GM12878 (cell line): ENCODE measurements at regions of chr2 and their contacts with region 1.

Region 1: DNA sequence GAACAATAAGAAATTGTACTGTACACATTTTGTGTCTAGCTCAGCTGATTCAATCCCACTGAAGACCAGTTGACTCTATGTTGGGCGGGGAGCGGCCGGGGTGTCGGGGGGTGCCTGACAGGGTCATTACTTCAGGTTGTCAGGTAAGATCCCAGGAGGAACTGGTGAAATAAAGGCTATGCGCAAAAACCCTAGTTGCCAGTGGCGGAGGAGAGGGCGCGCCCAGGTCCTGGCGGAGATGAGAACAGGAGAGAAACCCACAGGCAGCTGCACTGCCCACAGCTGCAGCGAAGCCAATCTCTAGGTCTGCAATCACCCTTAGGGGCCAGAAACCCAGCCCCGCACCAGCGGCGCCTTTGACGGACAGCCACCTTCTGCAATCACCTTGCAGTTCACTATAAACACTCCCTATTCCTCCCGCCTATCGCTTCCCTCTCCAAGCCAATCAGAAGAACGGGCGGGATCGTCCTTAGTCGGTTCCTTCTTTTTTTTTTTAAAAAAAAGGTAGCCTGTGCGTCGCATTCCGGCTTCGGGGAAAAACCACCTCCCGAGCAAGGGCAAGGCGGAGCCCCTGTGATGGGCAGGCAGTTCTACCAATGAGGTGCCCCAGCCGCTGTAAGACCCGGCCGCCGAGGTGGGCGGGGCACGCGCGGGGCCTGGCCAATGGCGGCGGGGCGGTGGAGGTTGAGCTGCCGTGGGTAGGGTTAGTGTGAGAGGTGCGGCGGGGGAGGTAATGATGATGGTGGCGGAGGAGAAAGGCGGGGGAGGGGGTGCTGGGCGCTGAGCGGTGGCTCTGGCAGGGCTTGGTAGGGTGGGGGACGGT is at the start of gene EHBP1:
- DNase-seq: peak; percentile 95
- ATAC-seq: peak; percentile 97
- H3K4me3 ChIP-seq: peak within 1 kb of the TSS; percentile 77
- H3K27ac ChIP-seq: peak within 1 kb of the TSS; percentile 68
- H3K4me1 ChIP-seq: no peaks in the 10 kb centered on the region
- H3K27me3 ChIP-seq: no peaks in the 10 kb centered on the region
- CTCF ChIP-seq: no peak
- EP300 ChIP-seq: no peak
- POLR2A ChIP-seq: peak; percentile 84
- RAD21 ChIP-seq: no peak
- polyA plus RNA-seq, gene EHBP1: 5.7 to 5.9 TPM

Region 2: GRCh38 chr2:62505750-62506420 is 199.3 kb before region 1 on chr2 and contains the start of gene TMEM17:
- CTCF ChIA-PET with region 1: interaction called, 5 read pairs
- POLR2A ChIA-PET with region 1: no interaction called
- RAD21 ChIA-PET with region 1: no interaction called
- SMC1A ChIA-PET with region 1: no interaction called
- in situ Hi-C with region 1: no loop called
- intact Hi-C with region 1: loop called (anchors 5 kb)
- DNase-seq: peak; percentile 35
- ATAC-seq: peak; percentile 94
- H3K4me3 ChIP-seq: peak within 1 kb of the TSS; percentile 88
- H3K27ac ChIP-seq: peak within 1 kb of the TSS; percentile 27; the same call in 1 of the 2 replicates
- H3K4me1 ChIP-seq: no peaks in the 10 kb centered on the region; the same call in 1 of the 2 replicates
- H3K27me3 ChIP-seq: no peaks in the 10 kb centered on the region
- CTCF ChIP-seq: no peak
- EP300 ChIP-seq: no peak
- POLR2A ChIP-seq: peak; percentile 47
- RAD21 ChIP-seq: 0 out of 2 replicates have a peak, but pooled peaks have one; percentile 4
- polyA plus RNA-seq, gene TMEM17: 1.2 to 1.6 TPM

Region 3: GRCh38 chr2:62660582-62661262 is 44.5 kb before region 1 on chr2:
- CTCF ChIA-PET with region 1: interaction called, 4 read pairs
- POLR2A ChIA-PET with region 1: no interaction called
- RAD21 ChIA-PET with region 1: interaction called, 4 read pairs
- SMC1A ChIA-PET with region 1: interaction called, 10 read pairs
- in situ Hi-C with region 1: no loop called
- intact Hi-C with region 1: loop called (anchors 2 kb)
- DNase-seq: no peak
- ATAC-seq: peak; percentile 43
- H3K4me3 ChIP-seq: no peak overlapping the region
- H3K27ac ChIP-seq: peak overlapping the region; percentile 62
- H3K4me1 ChIP-seq: peaks cover 34% of the 10 kb centered on the region
- H3K27me3 ChIP-seq: no peaks in the 10 kb centered on the region
- CTCF ChIP-seq: no peak
- EP300 ChIP-seq: no peak
- POLR2A ChIP-seq: no peak
- RAD21 ChIP-seq: no peak

Region 4: GRCh38 chr2:62719757-62720156 is 14.5 kb after region 1 on chr2:
- CTCF ChIA-PET with region 1: interaction called, 4 read pairs
- POLR2A ChIA-PET with region 1: interaction called, 9 read pairs
- RAD21 ChIA-PET with region 1: interaction called, 3 read pairs
- SMC1A ChIA-PET with region 1: interaction called, 18 read pairs
- in situ Hi-C with region 1: no loop called
- intact Hi-C with region 1: no loop called
- DNase-seq: no peak
- ATAC-seq: peak; percentile 55
- H3K4me3 ChIP-seq: no peak overlapping the region
- H3K27ac ChIP-seq: no peak overlapping the region
- H3K4me1 ChIP-seq: no peaks in the 10 kb centered on the region
- H3K27me3 ChIP-seq: no peaks in the 10 kb centered on the region
- CTCF ChIP-seq: no peak
- EP300 ChIP-seq: no peak
- POLR2A ChIP-seq: no peak
- RAD21 ChIP-seq: no peak

Region 5: DNA sequence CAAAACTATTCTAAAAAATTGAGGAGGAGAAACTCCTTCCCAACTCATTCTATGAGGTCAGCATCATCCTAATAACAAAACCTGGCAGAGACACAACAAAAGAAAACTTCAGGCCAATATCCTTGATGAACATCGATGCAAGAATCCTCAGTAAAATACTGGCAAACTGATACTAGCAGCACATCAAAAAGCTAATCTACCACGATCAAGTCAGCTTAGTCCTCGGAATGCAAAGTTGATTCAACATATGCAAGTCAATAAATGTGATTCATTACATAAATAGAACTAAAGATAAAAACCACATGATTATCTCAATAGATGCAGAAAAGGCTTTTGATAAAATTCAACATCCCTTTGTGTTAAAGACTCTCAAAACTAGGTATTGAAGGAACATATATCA is 63.4 kb after region 1 on chr2:
- CTCF ChIA-PET with region 1: interaction called, 14 read pairs
- POLR2A ChIA-PET with region 1: no interaction called
- RAD21 ChIA-PET with region 1: interaction called, 4 read pairs
- SMC1A ChIA-PET with region 1: interaction called, 17 read pairs
- in situ Hi-C with region 1: no loop called
- intact Hi-C with region 1: no loop called
- DNase-seq: no peak
- ATAC-seq: no peak
- H3K4me3 ChIP-seq: no peak overlapping the region
- H3K27ac ChIP-seq: no peak overlapping the region
- H3K4me1 ChIP-seq: no peaks in the 10 kb centered on the region
- H3K27me3 ChIP-seq: no peaks in the 10 kb centered on the region
- CTCF ChIP-seq: no peak
- EP300 ChIP-seq: no peak
- POLR2A ChIP-seq: no peak
- RAD21 ChIP-seq: no peak

Region 6: GRCh38 chr2:62774555-62775366 is 69.5 kb after region 1 on chr2:
- CTCF ChIA-PET with region 1: interaction called, 14 read pairs
- POLR2A ChIA-PET with region 1: no interaction called
- RAD21 ChIA-PET with region 1: interaction called, 4 read pairs
- SMC1A ChIA-PET with region 1: interaction called, 17 read pairs
- in situ Hi-C with region 1: no loop called
- intact Hi-C with region 1: loop called (anchors 2 kb)
- DNase-seq: peak; percentile 17
- ATAC-seq: peak; percentile 78
- H3K4me3 ChIP-seq: no peak overlapping the region
- H3K27ac ChIP-seq: no peak overlapping the region
- H3K4me1 ChIP-seq: no peaks in the 10 kb centered on the region
- H3K27me3 ChIP-seq: no peaks in the 10 kb centered on the region
- CTCF ChIP-seq: peak; percentile 49 to 71 (median 56); a peak in 5 of 6 replicates
- EP300 ChIP-seq: no peak
- POLR2A ChIP-seq: no peak
- RAD21 ChIP-seq: peak; percentile 94

Region 7: GRCh38 chr2:63424329-63425078 is 719.3 kb after region 1 on chr2:
- CTCF ChIA-PET with region 1: no interaction called
- POLR2A ChIA-PET with region 1: no interaction called
- RAD21 ChIA-PET with region 1: no interaction called
- SMC1A ChIA-PET with region 1: no interaction called
- in situ Hi-C with region 1: no loop called
- intact Hi-C with region 1: loop called (anchors 5 kb)
- DNase-seq: no peak
- ATAC-seq: peak; percentile 87
- H3K4me3 ChIP-seq: no peak overlapping the region
- H3K27ac ChIP-seq: no peak overlapping the region
- H3K4me1 ChIP-seq: no peaks in the 10 kb centered on the region
- H3K27me3 ChIP-seq: no peaks in the 10 kb centered on the region
- CTCF ChIP-seq: peak; percentile 43 to 66 (median 54)
- EP300 ChIP-seq: no peak
- POLR2A ChIP-seq: no peak
- RAD21 ChIP-seq: peak; percentile 79